ENCODE measurements at regions of chr4 and their contacts with region 1.

Region 1: DNA sequence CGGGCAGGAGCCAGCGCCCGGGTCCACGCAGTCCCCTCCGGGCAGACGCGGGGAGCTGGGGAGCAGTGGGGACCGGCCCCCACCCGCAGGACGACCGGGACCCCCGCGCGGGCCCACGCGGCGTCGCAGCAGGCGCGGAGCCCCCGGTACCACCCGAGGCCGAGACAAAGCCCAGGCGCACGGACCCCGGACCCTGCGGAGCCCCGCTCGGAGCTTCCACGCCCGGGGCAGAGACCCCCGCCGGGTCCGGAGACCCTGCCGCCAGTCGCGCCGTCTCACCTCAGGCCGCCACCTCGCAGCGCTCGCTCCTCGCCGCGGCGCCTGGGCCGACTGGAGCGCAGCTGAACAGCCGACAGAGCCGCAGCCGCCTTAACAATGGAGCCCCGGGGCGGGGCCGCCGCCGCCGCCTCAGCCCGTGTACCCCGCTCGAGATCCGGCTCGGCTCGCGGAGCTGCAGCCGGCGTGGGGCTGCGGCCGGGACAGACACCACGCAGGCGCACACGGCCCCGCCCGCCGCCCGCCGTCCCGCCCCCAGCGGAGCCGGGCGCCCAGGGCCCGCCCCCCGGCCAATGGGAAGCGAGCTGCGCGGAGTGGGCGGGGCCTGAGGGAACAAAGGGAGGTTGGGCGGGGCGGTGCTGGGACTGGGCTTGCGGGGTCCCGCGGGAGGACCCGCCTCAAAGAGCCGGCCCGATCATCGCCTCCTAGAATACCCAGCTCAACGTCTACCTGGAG is at the start of gene AFAP1:
- DNase-seq: peak; percentile 95
- H3K4me3 ChIP-seq: peak within 1 kb of the TSS; percentile 97
- H3K27ac ChIP-seq: peak within 1 kb of the TSS; percentile 90
- H3K4me1 ChIP-seq: peaks cover 15% of the 10 kb centered on the region
- H3K27me3 ChIP-seq: no peaks in the 10 kb centered on the region
- CTCF ChIP-seq: no peak
- total RNA-seq, gene AFAP1: 42.6 and 42.9 TPM in 2 replicates

Region 2: DNA sequence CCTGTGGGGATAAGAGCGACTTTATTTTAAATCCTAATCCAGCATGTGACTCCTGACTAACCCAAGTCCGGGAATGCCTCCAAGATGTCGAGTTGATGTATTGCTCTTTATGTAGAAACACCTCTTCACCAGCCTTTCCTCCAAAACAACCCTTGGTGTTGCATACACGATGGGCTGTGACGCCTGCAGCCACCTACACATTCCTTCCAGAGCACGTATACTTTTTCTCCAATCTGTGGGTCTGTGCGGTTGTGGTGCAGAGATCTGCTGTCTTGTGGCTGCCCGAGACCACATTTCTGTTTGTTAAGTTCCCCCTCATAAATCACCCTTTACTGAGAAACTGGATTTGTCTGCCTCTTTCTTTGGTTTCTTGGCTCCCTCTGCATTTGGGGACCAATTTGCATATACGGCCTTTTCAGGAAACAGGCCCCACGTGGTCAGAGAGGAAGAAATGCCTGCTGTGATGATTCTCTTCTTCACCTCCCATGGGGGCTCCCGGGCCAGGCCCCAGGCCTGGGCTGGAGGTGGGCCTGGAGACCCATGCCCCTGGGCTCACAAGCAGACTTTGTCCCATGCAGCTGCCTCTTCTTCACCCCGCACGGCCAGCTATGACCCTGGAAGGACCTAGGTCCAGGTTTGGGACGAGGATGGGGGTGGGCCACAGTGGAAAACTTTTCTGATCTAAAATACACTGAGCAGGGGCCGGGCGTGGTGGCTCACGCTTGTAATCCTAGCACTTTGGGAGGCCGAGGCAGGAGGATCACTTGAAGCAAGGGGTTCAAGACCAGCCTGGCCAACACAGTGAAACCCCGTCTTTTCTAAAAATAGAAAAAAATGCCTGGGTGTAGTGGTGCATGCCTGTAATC is 21.5 kb after region 1 on chr4:
- CTCF ChIA-PET with region 1: no interaction called
- POLR2A ChIA-PET with region 1: no interaction called
- intact Hi-C with region 1: loop called (anchors 2 kb)
- DNase-seq: peak; percentile 92
- H3K4me3 ChIP-seq: no peak overlapping the region
- H3K27ac ChIP-seq: peak overlapping the region; percentile 91
- H3K4me1 ChIP-seq: peaks cover 79% of the 10 kb centered on the region
- H3K27me3 ChIP-seq: no peaks in the 10 kb centered on the region
- CTCF ChIP-seq: no peak

Region 3: GRCh38 chr4:7973545-7973981 is 34.0 kb after region 1 on chr4:
- CTCF ChIA-PET with region 1: no interaction called
- POLR2A ChIA-PET with region 1: no interaction called
- intact Hi-C with region 1: no loop called
- DNase-seq: no peak
- H3K4me3 ChIP-seq: no peak overlapping the region
- H3K27ac ChIP-seq: no peak overlapping the region
- H3K4me1 ChIP-seq: peaks cover 30% of the 10 kb centered on the region
- H3K27me3 ChIP-seq: no peaks in the 10 kb centered on the region
- CTCF ChIP-seq: no peak

Region 4: GRCh38 chr4:8110071-8110986 is 170.8 kb after region 1 on chr4:
- CTCF ChIA-PET with region 1: no interaction called
- POLR2A ChIA-PET with region 1: no interaction called
- intact Hi-C with region 1: no loop called
- DNase-seq: no peak
- H3K4me3 ChIP-seq: no peak overlapping the region
- H3K27ac ChIP-seq: no peak overlapping the region
- H3K4me1 ChIP-seq: peaks cover 7% of the 10 kb centered on the region
- H3K27me3 ChIP-seq: no peaks in the 10 kb centered on the region
- CTCF ChIP-seq: no peak